ENCODE measurements at regions of chr17 and their contacts with region 1.

Region 1: DNA sequence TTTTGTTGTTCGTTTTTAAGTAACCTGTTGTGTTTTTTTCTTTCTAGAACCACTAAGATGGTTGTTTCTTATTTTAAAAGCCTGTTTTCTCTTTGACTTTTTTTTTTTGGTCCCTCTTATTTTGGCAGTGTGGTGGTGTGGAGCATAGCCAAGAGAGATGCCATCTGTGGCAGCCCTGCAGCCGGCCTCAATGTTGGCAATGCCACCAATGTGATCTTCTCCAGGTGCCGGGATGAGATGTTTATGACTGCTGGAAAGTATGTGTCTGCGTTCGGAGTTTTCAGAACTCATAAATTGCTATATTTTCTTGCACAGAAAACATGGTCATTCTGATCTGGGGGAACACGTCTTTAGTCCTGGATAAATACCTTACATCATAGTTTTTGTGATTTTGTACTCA is 17.6 kb downstream of the CFAP52 start:
- DNase-seq: no peak
- ATAC-seq: no peak
- H3K4me3 ChIP-seq: no peak overlapping the region
- H3K27ac ChIP-seq: no peak overlapping the region
- H3K4me1 ChIP-seq: no peaks in the 10 kb centered on the region
- H3K27me3 ChIP-seq: no peaks in the 10 kb centered on the region
- CTCF ChIP-seq: no peak
- POLR2A ChIP-seq: no peak

Region 2: DNA sequence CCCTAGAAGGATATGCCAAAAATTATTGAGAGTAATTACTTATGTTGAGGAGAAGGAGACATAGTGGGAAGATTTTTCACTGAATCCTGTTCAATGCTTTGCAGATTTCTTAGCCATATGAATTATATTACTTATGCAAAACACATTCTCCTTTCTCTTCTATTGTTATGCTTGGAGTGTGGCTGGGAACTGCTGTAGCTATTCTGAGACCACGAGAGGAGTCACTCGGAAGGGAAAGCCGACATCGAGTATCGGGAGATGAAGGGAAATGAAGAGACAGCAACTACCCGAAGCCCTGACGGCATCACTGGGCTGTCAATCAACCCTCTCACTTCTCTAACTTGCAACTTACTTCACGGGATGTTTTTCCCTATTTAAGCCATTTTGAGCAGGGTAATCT is 58.0 kb before region 1 on chr17:
- in situ Hi-C with region 1: loop called in 1 of 4 experiments (anchors 10 kb)
- intact Hi-C with region 1: no loop called
- DNase-seq: no peak
- ATAC-seq: no peak
- H3K4me3 ChIP-seq: no peak overlapping the region
- H3K27ac ChIP-seq: no peak overlapping the region
- H3K4me1 ChIP-seq: no peaks in the 10 kb centered on the region
- H3K27me3 ChIP-seq: no peaks in the 10 kb centered on the region
- CTCF ChIP-seq: no peak
- POLR2A ChIP-seq: no peak

Measured in gastrocnemius medialis (tissue), 4 donors.